ENCODE measurements at regions of chr3 and their contacts with region 1.

Region 1: GRCh38 chr3:32733631-32734229 is 48.7 kb downstream of the CNOT10 start:
- DNase-seq: no peak

Region 2: DNA sequence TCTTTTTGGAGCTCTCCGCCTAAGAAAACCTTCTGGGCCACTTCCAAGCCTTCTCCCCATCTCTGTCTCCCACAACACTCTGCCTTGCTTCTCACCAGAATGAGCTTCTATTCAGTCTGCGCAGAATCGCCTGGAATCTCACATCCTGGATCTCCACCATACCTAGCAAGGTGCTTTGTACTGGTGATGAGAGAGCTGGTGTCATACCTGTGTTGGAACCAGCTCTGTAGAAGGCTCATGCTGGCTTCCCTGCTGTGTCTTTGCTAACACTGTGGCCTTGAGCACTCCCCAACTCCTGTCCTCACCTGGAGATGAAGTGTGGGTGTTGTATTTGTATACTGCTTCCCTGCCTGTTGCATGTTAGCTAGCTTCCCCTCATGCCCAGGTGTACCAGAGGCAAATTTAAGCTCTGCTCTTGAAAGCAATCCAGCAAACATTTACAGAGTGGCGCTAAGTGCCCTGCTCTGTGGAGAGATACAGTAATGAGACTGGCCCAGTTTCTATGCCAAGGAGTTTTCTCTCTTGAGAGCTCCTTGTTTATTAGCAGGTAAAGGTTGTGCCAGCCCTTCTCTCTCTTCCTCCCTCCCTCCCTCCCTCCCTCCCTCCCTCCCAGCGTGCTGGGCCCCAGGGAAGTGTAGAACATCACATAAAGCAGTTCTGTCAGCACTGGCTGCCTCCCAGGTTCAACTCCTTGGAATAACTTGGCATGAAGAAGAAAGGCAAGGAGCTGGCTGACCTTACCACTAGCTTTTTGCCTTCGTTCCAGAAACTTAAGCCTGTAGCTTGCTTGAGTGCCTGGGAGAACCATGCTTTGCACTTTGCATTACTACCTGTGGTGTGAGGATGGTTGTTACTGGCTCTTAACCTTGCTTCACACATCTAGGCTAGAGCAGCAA is 139.0 kb after region 1 on chr3:
- intact Hi-C with region 1: no loop called
- DNase-seq: no peak

Region 3: GRCh38 chr3:32934150-32934742 is 200.5 kb after region 1 on chr3:
- intact Hi-C with region 1: loop called (anchors 1 kb)
- DNase-seq: peak in 1 of 10 donors; percentile 23

Region 4: GRCh38 chr3:33063651-33064051 is 329.9 kb after region 1 on chr3:
- intact Hi-C with region 1: no loop called
- DNase-seq: no peak